ENCODE measurements at regions of chr5 and their contacts with region 1.

Region 1: DNA sequence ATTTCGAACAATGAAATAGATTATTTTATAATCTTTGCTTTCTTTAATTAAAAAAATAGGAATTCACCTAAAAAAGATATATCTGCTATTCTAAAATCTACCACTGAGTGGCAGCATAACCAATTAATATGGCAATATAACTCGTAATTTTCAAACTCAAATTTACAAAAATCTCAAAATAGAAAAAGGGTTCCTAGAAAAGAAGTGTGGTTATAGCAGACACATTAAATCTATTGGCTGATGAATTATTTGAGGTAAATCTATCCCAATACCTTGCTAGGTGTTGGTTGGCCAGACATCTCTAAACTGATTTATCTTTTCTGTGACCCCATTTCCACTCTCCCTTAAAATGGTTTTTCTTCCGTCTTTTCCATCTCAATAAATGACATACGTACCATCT is 30.2 kb upstream of the NRG2 start:
- DNase-seq: no peak
- H3K4me3 ChIP-seq: no peak overlapping the region
- H3K27ac ChIP-seq: no peak overlapping the region
- H3K4me1 ChIP-seq: no peaks in the 10 kb centered on the region
- H3K27me3 ChIP-seq: no peaks in the 10 kb centered on the region
- CTCF ChIP-seq: peak; percentile 51 to 84 (median 70)
- POLR2A ChIP-seq: no peak

Region 2: DNA sequence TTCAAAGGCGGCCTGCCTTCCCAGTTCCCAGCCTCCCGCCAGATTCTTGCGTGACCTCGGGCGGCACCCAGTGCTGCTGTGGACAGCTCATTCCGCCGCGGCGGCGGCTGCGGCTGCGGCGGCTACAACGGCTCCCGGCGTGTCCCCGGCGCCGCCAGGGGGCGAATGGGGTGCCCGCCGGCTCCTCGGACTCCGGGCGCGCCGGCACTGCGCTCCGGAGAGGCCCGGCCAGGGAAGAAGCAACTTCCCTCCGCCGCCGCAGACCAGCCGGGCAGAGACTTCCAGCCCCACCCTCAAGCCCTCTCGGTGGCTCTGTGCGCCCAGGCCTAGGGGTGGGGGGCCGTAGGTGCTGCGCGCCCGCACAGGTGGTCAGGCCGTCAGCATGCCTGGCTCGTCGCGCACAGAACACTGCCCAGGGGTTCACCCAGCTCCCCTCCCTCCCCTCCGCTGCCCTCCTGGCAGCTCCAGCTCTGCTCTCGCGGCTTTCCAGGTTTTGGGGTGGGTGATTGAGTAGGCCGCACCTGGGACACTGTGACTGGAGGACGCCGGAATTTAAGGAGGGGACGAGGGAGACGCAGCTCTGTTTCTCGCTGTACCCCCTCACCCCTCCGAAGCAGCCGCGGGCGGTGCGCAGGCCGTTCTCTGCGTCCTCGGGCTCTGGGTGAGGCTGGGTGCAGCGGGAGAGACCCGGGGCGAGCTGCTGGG is 72.7 kb after region 1 on chr5:
- intact Hi-C with region 1: loop called in 1 of 2 experiments (anchors 5 kb)
- DNase-seq: peak; percentile 75 to 86 (median 81)
- H3K4me3 ChIP-seq: peak overlapping the region in 1 of 4 donors; percentile 60
- H3K27ac ChIP-seq: no peak overlapping the region
- H3K4me1 ChIP-seq: peaks cover 15 to 16% of the 10 kb centered on the region in 2 donors
- H3K27me3 ChIP-seq: no peaks in the 10 kb centered on the region
- CTCF ChIP-seq: peak; percentile 26 to 87 (median 58)
- POLR2A ChIP-seq: no peak

Region 3: DNA sequence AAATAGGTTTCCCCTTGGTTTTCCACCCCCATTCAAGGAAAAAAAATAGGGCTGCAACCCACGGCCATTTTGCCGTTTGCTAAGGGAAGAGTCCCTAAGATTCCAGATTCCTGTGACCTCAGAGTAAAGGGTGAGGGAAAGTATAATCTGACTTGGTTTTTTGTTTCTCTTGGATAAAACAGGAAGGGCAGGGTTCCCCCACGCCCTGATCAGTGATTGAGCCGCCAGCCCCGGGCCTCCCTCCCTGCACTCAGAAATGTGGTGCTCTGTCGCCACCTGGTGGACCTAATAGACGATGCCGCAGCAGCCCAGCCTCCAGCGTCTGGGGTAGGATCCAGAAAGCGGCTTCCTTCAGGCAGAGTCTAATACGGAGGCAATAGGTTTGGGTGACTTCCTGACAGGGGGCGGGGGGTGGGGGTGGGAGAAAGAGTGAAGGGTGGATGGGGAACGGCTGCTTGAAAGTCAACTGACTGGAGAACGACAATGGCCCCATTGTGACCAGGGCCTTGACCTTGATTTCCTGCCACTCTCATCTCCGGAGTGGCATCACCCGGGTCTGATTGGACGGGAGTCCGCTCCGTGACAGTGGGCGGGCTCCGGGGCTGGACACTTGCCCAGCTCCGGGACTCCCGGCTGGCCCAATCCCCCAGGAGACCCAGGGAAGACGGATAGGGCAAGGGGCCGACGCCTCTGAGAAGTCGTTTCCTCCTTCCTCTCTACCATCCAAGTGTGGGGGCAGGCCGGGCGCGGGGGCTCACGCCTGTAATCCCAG is 83.9 kb after region 1 on chr5:
- intact Hi-C with region 1: loop called in 1 of 2 experiments (anchors 2 kb)
- DNase-seq: peak; percentile 88 to 96 (median 91)
- H3K4me3 ChIP-seq: peak overlapping the region in 2 of 4 donors; percentile 22 to 56
- H3K27ac ChIP-seq: peak overlapping the region in 4 of 5 donors; percentile 29 to 83 (median 53)
- H3K4me1 ChIP-seq: peaks cover 0 to 8% of the 10 kb centered on the region in 2 donors
- H3K27me3 ChIP-seq: no peaks in the 10 kb centered on the region
- CTCF ChIP-seq: peak; percentile 82 to 98 (median 94)
- POLR2A ChIP-seq: no peak

Region 4: DNA sequence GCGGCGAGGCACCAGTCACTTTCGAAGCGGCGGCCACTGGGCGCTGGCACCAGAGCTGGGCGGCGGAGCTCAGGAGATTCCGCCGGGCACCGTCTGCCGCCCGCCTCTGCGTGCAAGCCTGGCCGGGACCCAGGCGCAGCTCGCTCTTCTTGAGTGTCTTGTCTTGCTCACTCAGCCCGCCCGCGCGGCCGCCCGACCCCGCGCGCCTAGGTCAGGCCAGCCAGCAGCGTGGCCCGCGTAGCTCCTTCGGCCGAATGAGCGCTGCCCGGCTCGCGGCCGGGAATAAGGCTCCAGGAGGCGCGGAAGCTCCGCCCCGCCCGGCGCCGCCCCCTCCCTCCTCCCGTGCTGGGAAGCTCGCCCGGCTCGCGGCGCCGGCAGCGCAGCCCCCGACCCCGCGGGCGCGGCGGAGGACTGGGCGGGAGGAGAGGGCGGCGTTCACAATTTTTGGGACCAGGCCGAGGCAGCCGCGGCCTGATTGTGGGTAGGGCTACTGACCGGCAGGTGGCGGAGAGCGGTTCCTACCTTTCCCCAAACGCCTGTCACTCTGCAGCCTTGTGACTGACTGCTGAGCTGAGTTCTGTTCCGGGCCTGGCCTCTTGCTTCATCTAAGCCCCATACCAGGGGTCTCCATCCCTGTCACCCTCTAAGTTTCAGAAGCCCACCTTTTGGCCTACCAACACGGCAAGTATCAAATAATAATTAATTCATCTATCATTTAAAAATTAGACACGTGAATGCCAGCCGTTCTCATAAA is 273.2 kb after region 1 on chr5 and contains the start of gene HBEGF:
- intact Hi-C with region 1: loop called in 1 of 2 experiments (anchors 10 kb)
- DNase-seq: peak; percentile 76 to 89 (median 82)
- H3K4me3 ChIP-seq: peak within 1 kb of the TSS; percentile 40 to 81 (median 52)
- H3K27ac ChIP-seq: peak within 1 kb of the TSS; percentile 53 to 91 (median 85)
- H3K4me1 ChIP-seq: peaks cover 19 to 24% of the 10 kb centered on the region in 2 donors
- H3K27me3 ChIP-seq: no peaks in the 10 kb centered on the region
- CTCF ChIP-seq: peak in 5 of 6 experiments; percentile 29 to 57 (median 43)
- POLR2A ChIP-seq: peak; percentile 90 to 94
- total RNA-seq, gene HBEGF: 0.54 to 9.8 (median 4.7) TPM